Heart left ventricle (tissue), 16 donors: ENCODE measurements at regions of chr2 and their contacts with region 1.

Region 1: GRCh38 chr2:130181325-130181879 is at the start of gene SMPD4:
- DNase-seq: peak; percentile 97 to 99 (median 98)
- ATAC-seq: peak; percentile 90 to 96 (median 93)
- H3K4me3 ChIP-seq: peak within 1 kb of the TSS; percentile 59 to 100 (median 88)
- H3K27ac ChIP-seq: peak within 1 kb of the TSS; percentile 54 to 98 (median 95)
- H3K4me1 ChIP-seq: peaks cover 6 to 31% (median 20%) of the 10 kb centered on the region in 12 donors
- H3K27me3 ChIP-seq: no peaks in the 10 kb centered on the region
- CTCF ChIP-seq: no peak
- POLR2A ChIP-seq: no peak
- total RNA-seq, gene SMPD4: 23.4 to 32.7 (median 29.2) TPM

Region 2: DNA sequence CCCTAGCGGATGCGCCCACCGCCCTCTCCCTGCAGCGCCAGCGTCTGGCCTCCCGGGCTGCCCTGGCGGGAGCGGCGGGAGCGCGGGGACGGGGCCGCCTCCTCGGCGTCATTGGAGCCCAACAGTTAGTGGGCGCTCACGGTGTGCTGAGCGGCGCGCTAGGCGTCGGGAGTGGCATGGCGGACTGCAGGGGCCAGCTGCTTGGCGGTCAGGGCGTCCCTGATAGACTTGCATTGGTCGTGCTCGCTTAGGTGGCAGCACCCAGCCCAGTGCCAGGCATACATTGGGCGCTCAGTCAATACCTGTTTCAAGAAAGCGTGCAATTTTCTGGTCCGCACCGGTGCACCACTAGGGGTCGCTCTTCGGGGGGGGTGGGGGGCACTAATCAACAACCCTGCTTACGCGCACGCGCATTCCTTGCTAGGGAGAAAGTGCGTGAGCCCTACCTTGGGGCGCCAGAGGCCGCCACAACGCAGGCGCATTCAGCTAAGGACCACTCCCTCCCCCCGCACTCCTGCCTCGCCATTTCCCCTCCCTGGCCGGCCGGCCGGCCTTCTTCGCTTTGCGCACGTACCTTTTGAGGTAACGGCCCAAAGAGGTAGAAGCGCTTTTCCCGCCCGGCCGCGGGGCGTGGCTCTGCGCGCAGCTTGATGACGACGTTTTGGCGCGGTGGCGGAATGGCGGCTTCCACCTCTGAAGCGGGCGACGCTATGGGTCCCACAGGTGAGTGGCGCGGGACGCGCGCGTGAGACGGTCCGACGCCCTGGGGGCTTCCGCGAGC is 1311.2 kb after region 1 on chr2:
- intact Hi-C with region 1: loop called in 1 of 10 experiments (anchors 5 kb)
- DNase-seq: peak; percentile 92 to 96 (median 93)
- ATAC-seq: peak; percentile 86 to 96 (median 88)
- H3K4me3 ChIP-seq: peak overlapping the region; percentile 65 to 97 (median 84)
- H3K27ac ChIP-seq: peak overlapping the region; percentile 82 to 96 (median 88)
- H3K4me1 ChIP-seq: peaks cover 2 to 63% (median 24%) of the 10 kb centered on the region in 12 donors
- H3K27me3 ChIP-seq: no peaks in the 10 kb centered on the region
- CTCF ChIP-seq: peak; percentile 56 to 87 (median 75)
- POLR2A ChIP-seq: peak in 1 of 2 donors; percentile 59